Left lung (tissue), 14 donors: ENCODE measurements at regions of chr3 and their contacts with region 1.

Region 1: DNA sequence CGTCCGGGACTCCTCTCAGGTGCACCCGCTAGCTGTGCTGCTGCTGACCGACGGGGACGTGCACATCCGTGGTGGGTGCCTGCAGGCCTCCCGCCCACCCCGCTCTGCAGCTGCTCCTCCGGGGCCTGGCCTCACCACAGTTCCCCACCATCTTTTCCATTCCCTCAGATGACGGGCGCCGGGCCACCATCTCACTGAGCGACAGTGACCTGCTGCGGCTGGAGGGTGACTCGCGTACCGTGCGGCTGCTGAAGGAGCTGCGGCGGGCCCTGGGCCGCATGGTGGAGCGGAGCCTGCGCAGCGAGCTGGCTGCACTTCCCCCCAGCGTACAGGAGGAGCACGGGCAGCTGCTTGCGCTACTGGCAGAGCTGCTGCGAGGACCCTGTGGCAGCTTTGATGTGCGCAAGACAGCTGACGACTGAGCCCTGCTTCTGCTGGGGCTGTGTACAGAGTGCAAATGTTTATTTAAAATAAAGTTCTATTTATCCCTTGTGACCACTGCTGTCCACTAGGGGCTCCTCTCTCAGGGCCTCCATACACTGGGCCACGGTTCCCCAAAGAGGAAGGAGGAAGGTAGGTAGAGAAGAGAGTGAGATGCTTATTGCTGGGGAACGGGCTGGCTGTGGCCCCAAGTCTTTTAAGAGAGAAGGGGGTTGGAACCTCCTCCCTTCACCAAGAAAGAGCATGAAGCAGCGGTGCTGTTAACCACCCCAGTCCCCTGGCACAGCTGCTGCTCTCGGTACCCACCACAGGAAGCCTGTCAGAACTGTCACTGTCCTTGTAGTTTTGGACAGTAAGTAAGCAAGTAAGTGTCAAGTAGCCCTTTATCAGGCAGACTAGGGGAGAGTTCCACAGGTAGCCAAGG is 47.0 kb downstream of the DHX30 start:
- DNase-seq: peak in 1 of 4 donors; percentile 77
- ATAC-seq: peak; percentile 21
- H3K4me3 ChIP-seq: no peak overlapping the region
- H3K27ac ChIP-seq: no peak overlapping the region
- H3K4me1 ChIP-seq: no peaks in the 10 kb centered on the region
- H3K27me3 ChIP-seq: no peaks in the 10 kb centered on the region
- CTCF ChIP-seq: no peak

Region 2: GRCh38 chr3:47802734-47803477 is 47.0 kb before region 1 on chr3 and contains the start of gene DHX30:
- intact Hi-C with region 1: no loop called
- DNase-seq: peak; percentile 85 to 99 (median 90)
- ATAC-seq: peak; percentile 93
- H3K4me3 ChIP-seq: peak within 1 kb of the TSS; percentile 69 to 70
- H3K27ac ChIP-seq: peak within 1 kb of the TSS; percentile 95
- H3K4me1 ChIP-seq: peaks cover 0 to 20% of the 10 kb centered on the region in 2 donors
- H3K27me3 ChIP-seq: no peaks in the 10 kb centered on the region
- CTCF ChIP-seq: no peak
- polyA plus RNA-seq, gene DHX30: 53.7 to 66.6 (median 60.2) TPM

Region 3: GRCh38 chr3:48151058-48151806 is 301.3 kb after region 1 on chr3:
- intact Hi-C with region 1: loop called in 1 of 2 experiments (anchors 10 kb)
- DNase-seq: peak; percentile 61 to 84 (median 73)
- ATAC-seq: peak; percentile 98
- H3K4me3 ChIP-seq: no peak overlapping the region
- H3K27ac ChIP-seq: peak overlapping the region in 1 of 2 donors; percentile 6
- H3K4me1 ChIP-seq: peaks cover 5 to 11% of the 10 kb centered on the region in 2 donors
- H3K27me3 ChIP-seq: no peaks in the 10 kb centered on the region
- CTCF ChIP-seq: peak; percentile 57 to 82